AG04449 (cell line): ENCODE measurements at regions of chr3 and their contacts with region 1.

Region 1: DNA sequence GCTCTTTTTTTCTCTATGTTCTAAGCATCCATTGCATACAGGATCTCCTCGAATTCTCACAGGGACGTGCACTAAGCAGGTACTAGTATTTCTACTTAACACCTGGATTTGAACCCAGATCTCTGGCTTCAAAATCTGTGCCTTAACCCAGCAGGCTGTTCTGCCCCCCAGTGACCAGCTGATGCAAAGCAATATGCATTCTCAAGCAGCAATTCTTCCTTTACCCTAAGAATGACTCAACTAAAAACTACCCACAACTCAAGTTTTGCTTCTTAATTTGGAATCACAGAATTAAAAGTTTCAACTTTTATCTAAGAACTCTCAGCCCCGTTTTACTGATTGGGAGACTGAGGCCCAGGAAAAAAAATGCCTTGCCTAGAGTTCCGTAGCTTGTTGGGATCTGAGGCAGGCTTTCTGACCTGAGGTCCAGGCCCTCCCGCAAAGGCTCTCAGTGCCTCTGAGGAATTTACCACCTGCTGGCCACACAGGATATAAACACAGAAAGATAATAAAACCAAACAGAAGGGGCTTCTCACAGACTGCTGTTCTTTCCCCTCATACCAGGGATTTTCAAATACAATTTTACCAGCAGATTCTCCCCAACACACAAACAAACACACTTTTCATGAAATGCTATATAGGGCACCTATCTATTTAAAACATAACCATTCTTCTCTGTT is 115.4 kb upstream of the RAD18 start:
- DNase-seq: no peak
- H3K4me3 ChIP-seq: no peak overlapping the region
- CTCF ChIP-seq: no peak

Region 2: GRCh38 chr3:8793242-8793641 is 285.5 kb before region 1 on chr3:
- CTCF ChIA-PET with region 1: no interaction called
- POLR2A ChIA-PET with region 1: no interaction called
- DNase-seq: peak; percentile 42
- H3K4me3 ChIP-seq: no peak overlapping the region
- CTCF ChIP-seq: no peak

Region 3: DNA sequence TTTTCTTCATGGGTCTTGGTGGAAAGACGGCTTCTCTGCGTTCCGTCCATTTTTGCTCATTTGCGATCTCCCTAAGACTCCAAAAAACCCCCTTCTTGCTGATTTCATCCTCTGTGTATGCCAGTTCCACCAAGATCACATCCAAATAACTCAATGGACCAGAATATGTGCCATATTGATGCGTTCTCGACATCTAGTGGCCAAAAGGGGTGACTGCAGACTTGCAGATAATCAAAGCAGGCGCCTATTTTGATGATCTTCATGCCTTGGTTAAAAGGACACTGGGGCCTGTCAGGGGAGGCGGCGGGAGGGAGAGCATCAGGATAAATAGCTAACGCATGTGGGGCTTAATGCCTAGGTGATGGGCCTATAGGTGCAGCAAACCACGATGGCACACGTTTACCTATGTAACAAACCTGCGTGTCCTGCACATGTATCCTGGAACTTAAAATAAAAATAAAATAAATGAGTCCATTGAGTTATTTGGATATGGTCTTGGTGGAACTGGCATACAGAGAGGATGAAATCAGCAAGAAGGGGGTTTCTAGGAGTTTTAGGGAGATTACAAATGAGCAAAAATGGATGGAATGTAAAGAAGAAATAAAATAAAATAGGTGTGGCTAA is 11.2 kb before region 1 on chr3:
- CTCF ChIA-PET with region 1: interaction called, 15 read pairs
- POLR2A ChIA-PET with region 1: no interaction called
- DNase-seq: peak; percentile 23
- H3K4me3 ChIP-seq: no peak overlapping the region
- CTCF ChIP-seq: peak; percentile 85